GM18951 (cell line): ENCODE measurements at regions of chr5 and their contacts with region 1.

Region 1: DNA sequence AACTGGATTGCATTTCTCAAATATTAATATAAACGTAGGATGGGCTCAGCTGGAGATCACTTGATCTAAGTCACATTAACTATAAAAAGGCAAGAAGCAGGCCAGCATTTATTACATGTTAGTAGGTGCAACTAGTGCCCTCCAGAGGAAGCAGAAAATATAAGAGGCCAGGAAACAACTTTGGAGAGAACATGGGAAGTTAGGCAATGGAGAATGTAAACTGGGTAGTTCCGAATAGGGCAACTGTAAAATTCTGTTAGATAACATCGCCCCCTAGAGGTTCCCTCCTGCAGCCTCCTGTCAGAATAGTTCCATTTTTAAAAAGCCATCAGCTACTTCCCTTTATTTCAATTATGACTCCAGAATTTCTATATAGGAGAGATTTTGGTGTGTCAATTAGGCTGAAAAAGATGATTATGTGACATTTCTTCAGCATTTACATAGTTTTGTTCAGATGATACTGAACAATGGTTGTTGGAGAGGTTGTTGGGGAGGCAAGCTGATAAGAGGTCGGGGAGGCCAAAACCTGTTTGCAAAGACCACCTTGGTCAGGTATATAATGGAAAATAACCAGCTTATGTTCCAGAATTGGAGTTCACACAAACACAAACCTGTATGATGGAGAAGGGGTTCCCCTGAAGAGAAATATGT is 22.4 kb downstream of the CCL28 start:
- POLR2A ChIP-seq: no peak

Region 2: DNA sequence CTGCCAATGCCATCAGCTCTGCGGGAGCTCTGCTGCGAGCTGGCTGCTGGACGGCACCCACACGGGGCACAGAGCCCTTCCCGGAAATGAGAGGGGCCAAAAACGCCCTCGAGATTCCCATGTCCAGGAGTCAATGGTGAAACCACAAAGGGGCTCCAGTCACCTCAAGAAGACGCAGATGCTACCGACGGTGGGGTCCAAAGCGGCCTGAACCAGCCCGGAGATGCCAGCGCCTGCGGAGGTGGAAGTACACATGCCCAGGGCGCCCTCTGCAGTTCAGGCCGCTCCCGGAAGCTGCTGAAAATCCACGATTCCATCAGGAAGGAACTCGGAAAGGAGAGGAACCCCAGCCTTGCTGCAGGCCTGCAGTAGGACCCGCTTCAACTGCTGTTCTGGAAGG is 495.7 kb before region 1 on chr5:
- in situ Hi-C with region 1: no loop called
- POLR2A ChIP-seq: no peak

Region 3: DNA sequence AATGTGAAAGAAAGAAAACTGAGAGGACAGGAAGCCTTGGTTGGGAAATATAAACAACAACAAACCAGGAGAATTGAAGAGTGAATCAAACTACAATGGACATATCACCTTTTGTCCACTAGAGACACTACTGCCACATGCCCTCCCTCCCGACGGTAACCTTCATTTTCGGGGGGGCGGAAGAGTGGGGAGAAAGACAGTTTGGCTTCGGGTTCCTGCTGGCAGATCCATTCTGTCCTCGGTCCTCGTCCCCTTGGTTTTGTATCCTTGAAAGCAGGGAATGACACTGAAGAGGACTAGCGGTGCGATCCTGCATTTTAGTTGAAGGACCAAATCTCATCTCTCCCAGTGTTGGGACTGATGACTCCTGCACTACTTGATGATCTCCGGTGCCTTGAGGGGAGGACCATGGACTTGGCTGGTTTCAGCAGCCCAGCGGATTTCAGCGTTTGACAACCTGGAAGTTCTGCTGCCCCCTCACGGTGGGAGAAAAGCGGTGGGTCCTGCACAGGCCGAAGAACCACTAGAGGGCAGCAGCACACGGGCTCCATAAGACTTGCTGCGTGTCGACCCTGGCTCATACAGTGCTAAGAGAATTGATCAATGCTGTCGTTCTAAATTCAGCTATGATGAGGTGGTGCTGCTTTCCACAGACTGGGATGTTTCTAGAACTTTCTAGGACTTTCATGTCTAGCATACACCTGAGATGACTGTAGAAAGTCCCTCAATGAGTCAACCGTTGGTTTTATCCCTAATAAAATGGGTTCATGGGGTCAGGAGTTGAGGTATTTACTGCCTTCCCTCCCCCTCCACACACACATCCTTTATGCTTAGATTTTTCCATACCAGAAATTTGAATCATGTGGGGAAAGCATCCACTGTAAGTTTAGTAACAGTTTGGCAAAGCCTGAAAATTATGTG is 284.2 kb before region 1 on chr5:
- in situ Hi-C with region 1: loop called (anchors 10 kb)
- POLR2A ChIP-seq: no peak

Region 4: DNA sequence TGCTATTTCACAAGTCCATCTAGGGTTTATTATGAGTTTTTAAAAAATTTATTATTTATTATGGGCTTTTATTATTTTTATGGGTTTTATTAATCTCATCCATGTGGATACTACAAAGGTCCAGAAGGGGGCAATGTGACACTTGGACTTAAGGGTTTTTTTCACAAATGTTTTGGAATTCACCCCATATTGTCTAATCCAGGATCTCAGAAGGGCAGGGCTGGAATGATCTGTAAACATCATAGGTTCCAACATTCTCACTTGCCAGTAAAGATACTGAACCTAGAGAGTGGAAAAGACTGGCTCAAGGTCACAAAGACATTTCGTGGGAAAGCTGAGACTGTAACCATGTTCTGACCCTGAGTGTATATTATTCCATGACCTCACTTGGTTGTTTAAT is 162.1 kb before region 1 on chr5:
- in situ Hi-C with region 1: loop called (anchors 10 kb)
- POLR2A ChIP-seq: no peak